Esophagus squamous epithelium (tissue), 5 donors: ENCODE measurements at regions of chr10 and their contacts with region 1.

Region 1: GRCh38 chr10:67697724-67698131 is 1.7 kb upstream of the CTNNA3 start:
- DNase-seq: no peak
- H3K4me3 ChIP-seq: no peak overlapping the region
- H3K27ac ChIP-seq: no peak overlapping the region
- H3K4me1 ChIP-seq: peaks cover 0 to 6% (median 4%) of the 10 kb centered on the region in 3 donors
- H3K27me3 ChIP-seq: no peaks in the 10 kb centered on the region
- CTCF ChIP-seq: peak; percentile 30 to 65 (median 54)
- POLR2A ChIP-seq: no peak

Region 2: DNA sequence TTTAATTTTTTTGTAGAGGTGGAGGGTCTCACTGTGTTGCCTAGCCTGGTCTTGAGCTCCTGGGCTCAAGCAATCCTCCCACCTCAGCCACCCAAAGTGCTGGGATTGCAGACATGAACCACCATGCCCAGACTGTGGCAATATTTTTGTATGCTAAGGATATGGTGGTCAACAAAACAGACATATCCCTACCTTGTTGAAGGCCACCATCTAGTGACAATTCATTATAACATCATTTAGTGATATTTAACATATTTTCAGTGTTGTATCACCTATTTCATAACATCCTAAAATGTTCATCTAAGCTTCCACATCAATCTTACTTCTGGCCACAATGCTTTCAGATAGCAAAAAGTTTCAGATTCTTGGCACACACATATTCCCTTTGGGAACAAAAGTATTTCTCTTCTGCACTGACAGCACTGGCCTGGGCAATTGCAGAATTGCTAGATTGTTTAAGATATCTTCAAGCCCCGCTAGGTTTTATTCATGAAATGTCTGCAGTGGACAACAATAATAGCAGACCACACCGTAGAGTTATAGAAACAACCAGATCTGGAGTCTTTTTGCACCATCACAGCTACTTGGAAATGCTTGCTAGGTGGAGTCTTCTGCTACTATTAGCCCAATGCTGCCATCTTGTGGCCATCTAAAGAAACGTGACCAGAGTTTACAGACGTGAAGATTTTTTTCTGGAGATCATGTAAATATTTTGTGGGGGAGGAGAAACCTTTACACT is 81.9 kb after region 1 on chr10:
- intact Hi-C with region 1: loop called (anchors 5 kb)
- DNase-seq: no peak
- H3K4me3 ChIP-seq: no peak overlapping the region
- H3K27ac ChIP-seq: no peak overlapping the region
- H3K4me1 ChIP-seq: no peaks in the 10 kb centered on the region
- H3K27me3 ChIP-seq: no peaks in the 10 kb centered on the region
- CTCF ChIP-seq: peak; percentile 62 to 84 (median 76)
- POLR2A ChIP-seq: no peak